Ascending aorta (tissue), 2 donors: ENCODE measurements at regions of chr19 and their contacts with region 1.

Region 1: DNA sequence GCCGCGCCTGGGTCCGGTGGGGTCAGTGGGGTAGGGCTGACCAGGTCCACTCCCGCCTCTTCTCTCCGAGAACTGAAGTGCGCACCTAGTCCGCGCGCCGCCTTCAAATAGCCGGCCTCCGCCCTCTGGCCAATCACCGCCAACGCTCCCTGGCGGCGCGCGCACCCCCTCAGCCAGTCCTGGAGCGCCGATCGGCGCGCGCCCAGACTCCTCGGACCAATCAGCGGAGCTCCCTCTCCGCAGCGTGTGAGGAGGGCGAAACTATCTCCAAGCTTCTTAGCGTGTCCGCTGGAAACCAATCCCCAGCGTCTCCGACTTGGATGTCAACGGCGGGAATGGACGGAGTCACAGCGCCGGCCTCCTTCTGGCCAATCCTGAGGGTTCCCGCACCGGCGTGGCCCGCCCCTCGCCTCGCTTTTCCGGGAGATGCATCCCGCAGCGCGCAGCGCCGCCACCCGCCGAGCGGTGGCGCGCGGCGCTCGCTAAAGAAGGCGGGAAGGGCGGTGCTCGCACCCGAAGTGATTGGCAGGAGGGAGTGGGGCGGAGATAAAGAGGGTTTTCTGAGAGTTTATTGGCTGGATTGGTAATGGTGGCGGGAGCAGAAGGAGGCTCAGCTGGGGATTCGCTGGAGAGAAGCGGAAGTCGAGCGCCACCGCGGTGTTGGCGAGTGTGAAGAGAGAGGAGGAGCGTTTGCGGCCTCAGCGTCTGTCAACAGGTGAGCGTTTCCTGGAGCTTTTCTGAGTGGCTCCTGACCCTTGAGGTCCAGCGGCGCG is at the start of gene ASF1B:
- DNase-seq: peak; percentile 98 to 99
- H3K4me3 ChIP-seq: peak within 1 kb of the TSS; percentile 76 to 85
- H3K27ac ChIP-seq: peak within 1 kb of the TSS; percentile 98
- H3K4me1 ChIP-seq: peaks cover 11 to 21% of the 10 kb centered on the region in 2 donors
- H3K27me3 ChIP-seq: no peaks in the 10 kb centered on the region
- CTCF ChIP-seq: peak; percentile 86 to 91 (median 86)
- total RNA-seq, gene ASF1B: 7.8 TPM

Region 2: GRCh38 chr19:14006243-14006765 is 130.4 kb before region 1 on chr19 and contains the start of gene RFX1:
- intact Hi-C with region 1: loop called (anchors 2 kb)
- DNase-seq: peak; percentile 98 to 100
- H3K4me3 ChIP-seq: peak within 1 kb of the TSS; percentile 99 to 100
- H3K27ac ChIP-seq: peak within 1 kb of the TSS; percentile 100
- H3K4me1 ChIP-seq: peaks cover 16 to 23% of the 10 kb centered on the region in 2 donors
- H3K27me3 ChIP-seq: no peaks in the 10 kb centered on the region
- CTCF ChIP-seq: no peak
- total RNA-seq, gene RFX1: 3.3 TPM

Region 3: GRCh38 chr19:14091081-14091812 is 45.4 kb before region 1 on chr19:
- intact Hi-C with region 1: loop called (anchors 1 kb)
- DNase-seq: peak in 1 of 2 donors; percentile 77
- H3K4me3 ChIP-seq: peak overlapping the region; percentile 80 to 90
- H3K27ac ChIP-seq: peak overlapping the region; percentile 92 to 94
- H3K4me1 ChIP-seq: peaks cover 3 to 9% of the 10 kb centered on the region in 2 donors
- H3K27me3 ChIP-seq: no peaks in the 10 kb centered on the region
- CTCF ChIP-seq: peak; percentile 3 to 23 (median 13)

Region 4: DNA sequence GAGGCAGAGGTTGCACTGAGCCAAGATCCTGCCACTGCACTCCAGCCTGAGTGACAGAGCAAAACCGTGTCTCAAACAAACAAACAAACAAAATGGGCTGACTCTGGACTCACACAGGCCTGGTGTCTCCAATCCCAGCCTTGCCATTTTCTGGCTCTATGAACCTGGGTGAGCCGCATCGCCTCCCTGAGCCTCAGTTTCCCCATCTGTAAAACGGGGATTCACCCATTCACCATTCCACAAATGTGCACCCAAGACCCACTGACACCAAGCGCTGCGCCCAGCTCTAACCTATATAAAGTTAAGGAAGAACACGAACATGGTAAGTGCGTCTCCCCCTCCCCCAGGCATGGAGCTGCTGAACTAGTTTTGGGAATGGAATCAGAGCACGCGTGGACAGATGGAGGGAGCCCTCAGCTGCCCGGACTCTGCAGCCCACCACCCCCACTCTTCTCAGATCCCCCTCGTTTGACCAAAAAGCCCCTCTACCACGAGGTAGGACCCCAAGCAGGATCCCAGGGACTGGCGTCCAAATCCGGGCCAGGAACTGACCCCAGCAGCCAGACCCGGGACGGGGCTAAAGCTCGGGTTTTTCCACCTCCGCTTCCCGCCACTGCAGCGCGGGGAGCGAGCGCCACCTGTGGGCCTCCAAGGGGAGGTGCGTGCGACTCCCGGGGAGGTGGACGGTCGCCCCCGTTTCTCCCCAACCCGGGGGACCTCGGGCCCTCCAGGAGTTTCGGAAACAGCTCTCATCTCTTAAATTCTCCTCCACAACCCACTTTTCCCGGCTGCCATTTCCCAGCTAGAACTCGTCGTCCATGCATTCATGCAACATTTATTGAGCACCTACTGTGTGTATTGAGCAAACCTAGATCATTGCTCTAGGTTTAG is 211.5 kb after region 1 on chr19:
- intact Hi-C with region 1: loop called (anchors 1 kb)
- DNase-seq: peak in 1 of 2 donors; percentile 77
- H3K4me3 ChIP-seq: peak overlapping the region; percentile 29 to 45
- H3K27ac ChIP-seq: no peak overlapping the region
- H3K4me1 ChIP-seq: no peaks in the 10 kb centered on the region
- H3K27me3 ChIP-seq: no peaks in the 10 kb centered on the region
- CTCF ChIP-seq: peak; percentile 89 to 99 (median 98)

Region 5: GRCh38 chr19:14419106-14419813 is 282.6 kb after region 1 on chr19 and contains the start of gene DDX39A:
- intact Hi-C with region 1: loop called (anchors 1 kb)
- DNase-seq: peak; percentile 98 to 99
- H3K4me3 ChIP-seq: peak within 1 kb of the TSS; percentile 81 to 93
- H3K27ac ChIP-seq: peak within 1 kb of the TSS; percentile 89 to 96
- H3K4me1 ChIP-seq: peaks cover 4 to 16% of the 10 kb centered on the region in 2 donors
- H3K27me3 ChIP-seq: no peaks in the 10 kb centered on the region
- CTCF ChIP-seq: no peak
- total RNA-seq, gene DDX39A: 83.4 TPM

Region 6: DNA sequence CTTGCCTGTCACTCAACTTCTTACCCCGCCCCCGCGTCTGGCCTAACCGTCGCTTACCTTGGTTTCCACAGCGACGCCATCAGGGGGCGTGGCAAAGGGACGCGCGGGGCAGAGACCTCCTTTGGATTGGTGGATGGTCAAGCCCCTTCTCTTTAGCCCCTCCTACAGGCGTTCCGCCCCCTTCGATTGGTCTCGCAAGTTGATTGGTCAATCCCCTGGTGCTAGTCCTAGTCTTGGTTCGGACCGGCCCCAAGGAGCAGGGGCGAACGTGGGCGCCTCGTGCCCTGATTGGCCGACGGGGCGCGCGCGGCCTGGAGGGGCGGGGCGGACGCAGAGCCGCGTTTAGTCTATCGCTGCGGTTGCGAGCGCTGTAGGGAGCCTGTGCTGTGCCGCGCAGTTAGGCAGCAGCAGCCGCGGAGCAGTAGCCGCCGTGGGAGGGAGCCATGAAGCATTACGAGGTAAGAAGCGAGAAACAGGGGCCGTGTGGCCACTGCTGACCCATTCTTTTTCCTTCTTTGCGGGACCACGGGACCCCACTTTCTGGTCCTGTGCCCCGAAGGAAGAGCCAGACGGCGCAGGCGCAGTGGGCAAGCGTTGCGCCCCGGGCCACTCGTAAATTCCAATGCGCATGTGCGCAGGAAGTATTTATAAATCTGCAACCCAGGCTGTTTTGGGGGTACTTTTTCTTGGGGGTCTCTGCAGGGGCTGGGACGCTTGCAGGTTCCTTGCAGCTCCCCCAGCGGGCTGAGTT is 392.7 kb after region 1 on chr19 and contains the start of gene TECR:
- intact Hi-C with region 1: loop called (anchors 1 kb)
- DNase-seq: peak; percentile 100
- H3K4me3 ChIP-seq: peak within 1 kb of the TSS; percentile 79 to 91
- H3K27ac ChIP-seq: peak within 1 kb of the TSS; percentile 71 to 84
- H3K4me1 ChIP-seq: peaks cover 0 to 9% of the 10 kb centered on the region in 2 donors
- H3K27me3 ChIP-seq: no peaks in the 10 kb centered on the region
- CTCF ChIP-seq: no peak
- total RNA-seq, gene TECR: 88.7 TPM